Vagina (tissue), 2 donors: ENCODE measurements at regions of chr7 and their contacts with region 1.

Region 1: DNA sequence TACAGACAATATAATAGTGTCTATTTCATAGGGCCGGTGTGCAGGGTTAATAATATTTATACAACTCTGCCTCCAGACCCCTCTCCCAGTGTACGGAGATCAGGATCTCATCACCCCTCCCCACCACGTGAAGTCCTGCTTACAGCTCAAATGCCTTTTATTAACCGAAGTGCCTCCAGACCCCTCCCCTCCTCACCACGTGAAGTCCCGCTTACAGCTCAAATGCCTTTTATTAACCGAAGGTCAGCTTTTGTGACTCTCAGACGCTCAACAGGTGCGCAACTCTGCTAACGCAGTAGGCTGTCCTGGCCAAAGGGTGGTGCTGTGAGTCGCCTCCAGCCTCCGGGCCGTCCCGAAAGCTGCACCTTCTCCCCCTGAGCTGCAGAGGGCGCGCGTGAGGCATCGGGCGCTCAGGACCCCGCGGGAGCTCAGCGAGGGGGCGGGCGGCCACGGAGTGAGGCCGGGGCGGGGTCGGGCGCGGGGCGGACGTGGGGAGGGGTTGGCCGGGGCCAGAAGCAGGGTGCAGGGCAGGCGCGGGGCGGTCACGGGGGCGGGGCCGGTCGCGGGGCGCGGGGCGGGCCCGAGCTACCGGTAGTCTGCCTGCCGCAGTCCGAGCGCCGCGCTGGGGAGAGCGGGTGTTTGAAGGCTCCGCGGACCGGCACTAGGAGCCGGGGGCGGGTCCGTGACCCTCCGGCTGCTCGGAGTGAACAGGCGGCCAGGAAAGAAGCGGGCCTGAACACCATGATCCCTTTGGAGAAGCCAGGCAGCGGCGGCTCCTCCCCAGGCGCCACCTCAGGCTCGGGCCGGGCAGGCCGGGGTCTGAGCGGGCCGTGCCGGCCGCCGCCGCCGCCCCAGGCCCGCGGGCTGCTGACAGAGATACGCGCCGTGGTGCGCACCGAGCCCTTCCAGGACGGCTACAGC is at the start of gene STK17A:
- DNase-seq: peak; percentile 96 to 98
- H3K4me3 ChIP-seq: peak within 1 kb of the TSS; percentile 64 to 82
- H3K27ac ChIP-seq: peak within 1 kb of the TSS; percentile 92
- H3K4me1 ChIP-seq: peaks cover 30% of the 10 kb centered on the region
- H3K27me3 ChIP-seq: no peaks in the 10 kb centered on the region
- CTCF ChIP-seq: peak; percentile 97 to 100 (median 99)
- POLR2A ChIP-seq: peak in 1 of 2 donors; percentile 75
- total RNA-seq, gene STK17A: 16.7 TPM

Region 2: DNA sequence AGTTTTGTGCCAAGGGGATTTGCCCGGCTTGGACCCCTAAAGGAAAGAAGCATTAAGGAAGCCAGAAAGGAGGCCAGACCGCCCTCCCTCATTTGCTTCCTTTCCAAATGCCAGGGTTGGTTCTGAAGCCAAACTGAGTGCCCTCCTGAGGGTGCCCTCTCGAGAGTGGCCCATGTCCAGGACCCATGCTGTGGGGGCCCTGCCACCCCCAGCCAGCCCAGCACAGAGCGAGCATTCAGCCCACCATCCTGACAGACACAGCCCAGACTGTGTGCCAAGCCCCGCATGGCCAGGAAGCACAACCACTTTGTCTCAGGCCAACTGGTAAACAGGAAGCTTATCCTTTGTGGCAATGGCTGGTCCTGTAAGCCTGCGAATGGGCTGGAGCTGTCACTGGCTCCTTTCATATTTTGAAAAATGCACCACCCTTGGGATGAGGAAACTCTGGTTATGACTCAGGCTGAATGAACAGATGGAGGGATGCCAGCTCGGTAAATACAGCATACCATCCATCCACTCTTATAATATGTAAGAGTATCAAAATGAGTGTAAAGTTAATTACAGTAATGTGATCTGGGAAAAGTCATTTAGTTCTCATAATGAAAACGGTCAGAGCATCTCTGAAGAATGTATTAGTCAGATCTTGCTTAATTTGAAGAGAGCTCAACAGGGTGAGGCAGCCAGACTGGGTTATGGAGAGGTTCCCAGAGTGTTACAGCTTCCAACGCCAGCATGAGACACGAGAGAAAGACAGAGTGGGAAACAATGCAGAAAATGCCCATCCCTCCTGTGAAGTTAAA is 65.1 kb after region 1 on chr7:
- intact Hi-C with region 1: loop called (anchors 10 kb)
- DNase-seq: no peak
- H3K4me3 ChIP-seq: peak overlapping the region in 1 of 2 donors; percentile 28
- H3K27ac ChIP-seq: peak overlapping the region; percentile 92
- H3K4me1 ChIP-seq: peaks cover 73% of the 10 kb centered on the region
- H3K27me3 ChIP-seq: no peaks in the 10 kb centered on the region
- CTCF ChIP-seq: no peak
- POLR2A ChIP-seq: no peak

Region 3: GRCh38 chr7:43700059-43700501 is 117.3 kb after region 1 on chr7:
- intact Hi-C with region 1: loop called (anchors 5 kb)
- DNase-seq: no peak
- H3K4me3 ChIP-seq: no peak overlapping the region
- H3K27ac ChIP-seq: no peak overlapping the region
- H3K4me1 ChIP-seq: peaks cover 7% of the 10 kb centered on the region
- H3K27me3 ChIP-seq: no peaks in the 10 kb centered on the region
- CTCF ChIP-seq: peak; percentile 56 to 75 (median 71)
- POLR2A ChIP-seq: no peak

Region 4: DNA sequence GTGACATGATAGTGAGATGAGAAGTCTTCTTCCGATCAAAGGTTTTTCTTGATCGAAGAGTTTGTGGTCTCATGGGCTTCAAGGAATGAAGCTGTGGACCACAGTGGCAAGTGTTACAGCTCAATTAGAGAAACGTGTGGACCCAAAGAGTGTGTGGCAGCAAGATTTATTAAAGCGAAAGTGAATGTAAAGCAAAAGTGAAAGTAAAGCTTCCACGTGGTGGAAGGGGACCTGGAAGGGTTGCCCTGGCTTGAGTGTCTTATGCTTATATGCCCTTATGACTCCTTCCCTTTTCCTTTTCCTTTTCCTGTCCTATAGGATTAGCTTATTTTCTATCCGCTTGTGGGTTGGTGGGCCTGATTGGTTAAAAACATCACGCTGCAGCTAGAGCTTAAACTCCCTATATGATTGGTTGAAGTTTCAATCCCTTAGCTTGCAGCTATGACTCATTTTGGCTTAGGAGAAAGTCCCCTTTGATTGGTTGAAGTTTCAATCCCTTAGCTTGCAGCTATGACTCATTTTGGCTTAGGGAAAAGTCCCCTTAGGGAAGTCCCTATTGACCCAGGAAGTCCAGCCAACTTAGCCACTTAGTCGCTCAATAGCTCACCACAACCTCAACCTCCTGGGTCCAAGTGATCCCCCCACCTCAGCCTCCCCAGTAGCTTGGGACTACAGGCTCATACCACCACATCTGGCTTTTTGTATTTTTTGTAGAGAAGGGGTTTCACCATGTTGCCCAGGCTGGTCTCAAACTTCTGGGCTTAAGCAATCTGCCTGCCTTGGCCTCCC is 251.9 kb after region 1 on chr7:
- intact Hi-C with region 1: loop called (anchors 10 kb)
- DNase-seq: no peak
- H3K4me3 ChIP-seq: peak overlapping the region in 1 of 2 donors; percentile 9
- H3K27ac ChIP-seq: no peak overlapping the region
- H3K4me1 ChIP-seq: no peaks in the 10 kb centered on the region
- H3K27me3 ChIP-seq: no peaks in the 10 kb centered on the region
- CTCF ChIP-seq: no peak
- POLR2A ChIP-seq: no peak